T-cell (primary cell): ENCODE measurements at regions of chr15 and their contacts with region 1.

Region 1: DNA sequence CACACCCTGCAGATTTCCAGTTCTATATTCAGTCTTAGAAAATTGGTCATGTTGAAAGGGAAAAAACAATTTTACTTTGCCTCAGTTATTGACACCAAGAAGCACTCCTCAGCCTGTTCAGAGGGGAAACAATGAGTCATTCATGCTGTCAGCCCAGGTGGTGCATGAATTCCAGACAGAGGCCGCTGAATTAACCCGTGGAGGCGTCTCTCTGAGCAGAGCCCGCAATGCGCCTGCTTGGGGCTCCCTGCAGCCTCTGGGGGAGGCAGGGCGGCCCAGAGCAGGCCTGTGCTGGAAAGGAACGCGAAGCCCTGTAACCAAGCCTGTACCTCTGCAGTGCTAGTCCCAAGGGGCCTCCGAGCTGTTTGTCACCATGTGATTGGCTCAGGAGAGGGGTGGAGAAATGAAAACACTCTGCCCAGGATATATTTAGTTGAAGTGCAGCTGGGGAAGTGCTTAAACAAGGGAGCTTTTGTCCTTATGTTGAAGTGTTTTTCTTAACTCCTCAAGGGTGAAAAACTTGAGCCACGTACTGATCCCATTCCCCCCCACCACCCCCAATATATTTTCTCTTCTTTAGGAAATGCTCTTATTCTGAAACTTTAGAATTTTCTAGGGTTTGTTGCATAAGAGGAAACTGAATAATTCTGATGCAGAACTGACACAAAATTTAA is 68.3 kb upstream of the CHD2 start:
- DNase-seq: peak; percentile 67 to 90 (median 78)
- ATAC-seq: peak; percentile 92 to 95 (median 94)
- H3K4me3 ChIP-seq: peak overlapping the region; percentile 29 to 47
- H3K4me3 Mint-ChIP-seq: peak overlapping the region; percentile 57 to 77 (median 71)
- H3K27ac ChIP-seq: peak overlapping the region; percentile 92
- H3K27ac Mint-ChIP-seq: peak overlapping the region; percentile 97 to 99
- H3K4me1 ChIP-seq: peaks cover 33 to 35% of the 10 kb centered on the region in 2 experiments
- H3K4me1 Mint-ChIP-seq: peaks cover 44 to 51% (median 48%) of the 10 kb centered on the region in 3 donors
- H3K27me3 ChIP-seq: no peaks in the 10 kb centered on the region
- H3K27me3 Mint-ChIP-seq: no peaks in the 10 kb centered on the region

Region 2: GRCh38 chr15:92797168-92797951 is 34.4 kb before region 1 on chr15:
- CTCF ChIA-PET with region 1: interaction called, 5 to 11 read pairs
- POLR2A ChIA-PET with region 1: no interaction called
- DNase-seq: peak in 11 of 35 experiments; percentile 9 to 90 (median 30)
- ATAC-seq: peak; percentile 74 to 87 (median 86)
- H3K4me3 ChIP-seq: no peak overlapping the region
- H3K4me3 Mint-ChIP-seq: no peak overlapping the region
- H3K27ac ChIP-seq: no peak overlapping the region
- H3K27ac Mint-ChIP-seq: peak overlapping the region; percentile 56 to 87
- H3K4me1 ChIP-seq: no peaks in the 10 kb centered on the region
- H3K4me1 Mint-ChIP-seq: peaks cover 5 to 10% (median 6%) of the 10 kb centered on the region in 3 donors
- H3K27me3 ChIP-seq: no peaks in the 10 kb centered on the region
- H3K27me3 Mint-ChIP-seq: no peaks in the 10 kb centered on the region

Region 3: DNA sequence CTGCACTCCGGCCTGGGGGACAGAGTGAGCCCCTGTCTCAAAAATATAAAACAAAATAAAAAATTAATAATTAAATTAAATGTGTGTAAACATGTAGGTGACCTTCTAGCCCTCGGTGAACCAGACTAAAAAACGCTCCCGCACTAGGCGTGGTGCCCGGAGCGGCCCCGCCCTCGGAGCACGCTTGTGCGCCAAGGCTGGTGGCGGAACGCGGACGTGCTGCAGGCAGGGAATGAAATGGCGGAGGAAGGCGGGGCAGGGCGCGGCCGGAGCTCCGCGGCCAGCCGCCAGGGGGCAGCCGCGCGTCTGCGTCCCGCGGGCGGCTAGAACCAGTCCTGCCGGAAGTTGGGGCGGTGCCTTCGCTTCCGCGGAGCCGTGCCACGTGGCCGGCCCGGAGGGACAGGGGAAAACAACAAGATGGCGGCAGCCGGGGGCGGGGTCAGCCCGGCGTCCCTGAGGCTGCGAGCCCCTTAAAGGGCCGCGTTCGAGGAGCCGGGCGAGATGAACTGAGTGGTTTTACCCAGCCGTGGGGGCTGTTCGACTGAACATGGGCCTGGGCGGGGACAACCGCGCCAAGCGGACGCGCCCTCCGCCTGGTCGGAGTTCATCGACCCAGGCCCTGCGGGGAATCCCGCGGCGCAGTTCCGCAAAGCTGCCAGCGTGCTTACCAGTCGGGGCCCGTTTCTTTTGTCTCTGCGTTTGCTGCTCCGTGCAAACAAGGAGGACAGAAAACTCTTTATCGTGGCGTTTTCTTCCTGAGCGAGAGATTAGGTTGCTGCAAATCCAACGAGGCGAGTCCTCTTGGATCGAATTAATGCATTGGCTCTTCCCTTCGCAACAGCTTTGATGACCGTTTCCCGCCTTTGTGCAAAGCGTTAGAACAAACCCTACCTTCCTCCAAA is 22.6 kb before region 1 on chr15:
- CTCF ChIA-PET with region 1: interaction called, 6 to 7 read pairs
- POLR2A ChIA-PET with region 1: interaction called, 8 to 11 read pairs
- DNase-seq: peak; percentile 96 to 99 (median 98)
- ATAC-seq: peak; percentile 83 to 91 (median 84)
- H3K4me3 ChIP-seq: peak overlapping the region; percentile 62 to 94
- H3K4me3 Mint-ChIP-seq: peak overlapping the region; percentile 85 to 91 (median 91)
- H3K27ac ChIP-seq: peak overlapping the region; percentile 100
- H3K27ac Mint-ChIP-seq: peak overlapping the region; percentile 98 to 99
- H3K4me1 ChIP-seq: peaks cover 32 to 56% of the 10 kb centered on the region in 2 experiments
- H3K4me1 Mint-ChIP-seq: peaks cover 44 to 53% (median 51%) of the 10 kb centered on the region in 3 donors
- H3K27me3 ChIP-seq: no peaks in the 10 kb centered on the region
- H3K27me3 Mint-ChIP-seq: no peaks in the 10 kb centered on the region

Region 4: GRCh38 chr15:92820236-92821021 is 11.4 kb before region 1 on chr15:
- CTCF ChIA-PET with region 1: interaction called in 1 of 2 experiments, 10 read pairs
- POLR2A ChIA-PET with region 1: interaction called, 8 to 15 read pairs
- DNase-seq: peak; percentile 64 to 93 (median 78)
- ATAC-seq: peak; percentile 84 to 92 (median 89)
- H3K4me3 ChIP-seq: peak overlapping the region; percentile 49 to 67
- H3K4me3 Mint-ChIP-seq: peak overlapping the region; percentile 86 to 91 (median 88)
- H3K27ac ChIP-seq: peak overlapping the region; percentile 93
- H3K27ac Mint-ChIP-seq: peak overlapping the region; percentile 89 to 94
- H3K4me1 ChIP-seq: peaks cover 41 to 44% of the 10 kb centered on the region in 2 experiments
- H3K4me1 Mint-ChIP-seq: peaks cover 59 to 67% (median 61%) of the 10 kb centered on the region in 3 donors
- H3K27me3 ChIP-seq: no peaks in the 10 kb centered on the region
- H3K27me3 Mint-ChIP-seq: no peaks in the 10 kb centered on the region

Region 5: DNA sequence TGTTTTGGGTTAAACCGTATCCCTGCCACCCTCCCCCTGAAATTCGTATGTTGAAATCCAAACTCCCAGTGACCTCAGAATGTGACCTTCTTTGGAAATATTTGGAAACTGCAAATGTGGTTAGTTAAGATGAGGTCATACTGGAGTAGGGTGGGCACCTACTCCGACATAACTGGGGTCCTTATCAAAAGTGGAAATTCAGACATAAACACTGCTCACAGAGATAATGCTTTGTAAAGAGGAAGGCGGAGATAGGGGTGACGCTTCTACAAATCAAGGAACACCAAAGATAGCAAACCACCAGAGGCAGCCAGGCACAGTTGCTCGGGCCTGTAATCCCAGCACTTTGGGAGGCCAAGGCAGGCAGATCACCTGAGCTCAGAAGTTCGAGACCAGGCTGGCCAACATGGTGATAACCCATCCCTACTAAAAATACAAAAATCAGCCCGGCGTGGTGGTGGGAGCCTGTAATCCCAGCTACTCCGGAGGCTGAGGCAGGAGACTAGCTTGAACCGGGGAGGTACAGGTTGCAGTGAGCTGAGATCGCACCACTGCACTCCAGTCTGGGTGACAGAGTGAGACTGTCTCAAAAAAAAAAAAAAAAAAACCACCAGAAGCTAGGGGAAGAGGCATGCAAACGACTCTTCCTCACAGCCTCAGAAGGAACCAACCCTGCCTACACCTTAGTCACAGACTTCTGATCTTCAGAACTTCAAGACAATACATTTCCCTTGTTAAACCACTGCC is 17.2 kb after region 1 on chr15:
- CTCF ChIA-PET with region 1: interaction called, 3 read pairs
- POLR2A ChIA-PET with region 1: interaction called, 9 to 10 read pairs
- DNase-seq: peak in 28 of 35 experiments; percentile 14 to 79 (median 28)
- ATAC-seq: peak; percentile 90 to 97 (median 93)
- H3K4me3 ChIP-seq: peak overlapping the region in 1 of 2 donors; percentile 32
- H3K4me3 Mint-ChIP-seq: peak overlapping the region; percentile 24 to 58 (median 39)
- H3K27ac ChIP-seq: peak overlapping the region; percentile 74
- H3K27ac Mint-ChIP-seq: peak overlapping the region; percentile 100
- H3K4me1 ChIP-seq: peaks cover 42 to 46% of the 10 kb centered on the region in 2 experiments
- H3K4me1 Mint-ChIP-seq: peaks cover 46 to 70% (median 67%) of the 10 kb centered on the region in 3 donors
- H3K27me3 ChIP-seq: no peaks in the 10 kb centered on the region
- H3K27me3 Mint-ChIP-seq: no peaks in the 10 kb centered on the region

Region 6: GRCh38 chr15:92903941-92904831 is 72.4 kb after region 1 on chr15:
- CTCF ChIA-PET with region 1: interaction called in 1 of 2 experiments, 10 read pairs
- POLR2A ChIA-PET with region 1: interaction called, 4 to 5 read pairs
- DNase-seq: peak; percentile 96 to 100 (median 99)
- ATAC-seq: peak; percentile 84 to 89 (median 87)
- H3K4me3 ChIP-seq: peak overlapping the region; percentile 87 to 88
- H3K4me3 Mint-ChIP-seq: peak overlapping the region; percentile 93 to 99 (median 99)
- H3K27ac ChIP-seq: peak overlapping the region; percentile 96
- H3K27ac Mint-ChIP-seq: peak overlapping the region; percentile 100
- H3K4me1 ChIP-seq: peaks cover 22 to 59% of the 10 kb centered on the region in 2 experiments
- H3K4me1 Mint-ChIP-seq: peaks cover 62 to 82% (median 68%) of the 10 kb centered on the region in 3 donors
- H3K27me3 ChIP-seq: no peaks in the 10 kb centered on the region
- H3K27me3 Mint-ChIP-seq: no peaks in the 10 kb centered on the region

Region 7: GRCh38 chr15:92917606-92918407 is 86.0 kb after region 1 on chr15:
- CTCF ChIA-PET with region 1: interaction called, 3 to 4 read pairs
- POLR2A ChIA-PET with region 1: interaction called, 9 to 12 read pairs
- DNase-seq: peak; percentile 77 to 97 (median 89)
- ATAC-seq: peak; percentile 32 to 41 (median 36)
- H3K4me3 ChIP-seq: no peak overlapping the region
- H3K4me3 Mint-ChIP-seq: peak overlapping the region; percentile 7 to 74 (median 29)
- H3K27ac ChIP-seq: peak overlapping the region; percentile 93
- H3K27ac Mint-ChIP-seq: peak overlapping the region; percentile 95 to 96
- H3K4me1 ChIP-seq: peaks cover 69 to 75% of the 10 kb centered on the region in 2 experiments
- H3K4me1 Mint-ChIP-seq: peaks cover 86 to 89% (median 89%) of the 10 kb centered on the region in 3 donors
- H3K27me3 ChIP-seq: no peaks in the 10 kb centered on the region
- H3K27me3 Mint-ChIP-seq: no peaks in the 10 kb centered on the region

Region 8: DNA sequence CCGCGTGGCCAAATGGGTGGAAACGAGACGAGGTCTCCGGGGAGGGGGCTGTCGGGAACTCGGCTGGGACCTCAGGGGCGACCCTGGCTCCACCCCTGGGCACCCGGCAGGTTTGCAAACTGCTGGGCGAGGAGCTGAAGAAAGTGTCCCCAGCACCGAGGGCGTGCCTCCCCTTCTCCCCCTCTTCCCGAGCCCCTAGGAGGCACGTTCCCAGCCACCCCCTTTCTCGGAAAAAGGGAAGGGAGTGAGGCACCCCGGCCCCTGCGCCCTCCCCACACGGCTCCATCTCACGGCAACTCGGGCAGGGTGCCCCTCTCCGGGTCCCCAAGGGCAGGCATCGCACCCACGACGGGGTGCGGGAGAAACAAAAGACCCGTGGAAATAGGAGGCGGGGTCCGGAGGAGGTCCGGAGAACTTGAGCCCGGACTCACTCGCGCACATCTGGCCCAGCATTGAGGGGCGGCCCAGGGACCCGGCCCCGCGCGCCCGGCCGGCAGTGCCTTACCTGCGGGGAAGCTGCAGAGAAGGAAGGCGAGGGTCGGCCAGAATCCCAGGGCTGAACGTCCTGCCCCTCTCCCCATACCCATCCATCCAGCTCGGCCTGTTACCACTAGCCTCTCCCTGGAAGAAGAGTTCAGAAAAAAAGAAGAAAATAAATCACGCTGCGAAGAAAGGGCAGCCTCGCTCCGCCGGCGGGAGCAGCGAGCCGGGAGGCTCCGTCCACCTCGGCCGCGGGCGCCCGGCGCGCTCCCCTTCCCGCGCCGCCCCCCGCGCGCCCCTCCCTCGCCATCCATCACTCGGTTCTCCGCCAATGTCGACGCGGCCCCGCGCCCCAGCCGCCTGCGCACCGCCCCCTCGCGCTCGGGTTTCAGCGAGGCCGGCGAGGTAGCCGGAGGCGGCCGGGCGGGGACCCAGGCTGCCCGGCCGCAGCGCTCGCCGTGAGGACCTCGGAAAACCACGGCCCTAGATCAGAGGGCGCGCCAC is 240.9 kb after region 1 on chr15:
- CTCF ChIA-PET with region 1: no interaction called
- POLR2A ChIA-PET with region 1: no interaction called
- DNase-seq: no peak
- ATAC-seq: peak in 1 of 4 experiments; percentile 20
- H3K4me3 ChIP-seq: peak overlapping the region; percentile 17 to 55
- H3K4me3 Mint-ChIP-seq: peak overlapping the region; percentile 28 to 81 (median 37)
- H3K27ac ChIP-seq: no peak overlapping the region
- H3K27ac Mint-ChIP-seq: no peak overlapping the region
- H3K4me1 ChIP-seq: peaks cover 0 to 15% of the 10 kb centered on the region in 2 experiments
- H3K4me1 Mint-ChIP-seq: peaks cover 16 to 22% (median 17%) of the 10 kb centered on the region in 3 donors
- H3K27me3 ChIP-seq: peaks cover 0 to 56% of the 10 kb centered on the region in 2 experiments
- H3K27me3 Mint-ChIP-seq: peaks cover 49 to 60% of the 10 kb centered on the region in 2 donors